Natural killer cell (primary cell): ENCODE measurements at regions of chr22 and their contacts with region 1.

Region 1: GRCh38 chr22:22848364-22848866 is 39.2 kb upstream of the IGLL5 start:
- DNase-seq: peak; percentile 56 to 85
- ATAC-seq: peak; percentile 58 to 90 (median 83)
- H3K4me3 ChIP-seq: no peak overlapping the region
- H3K4me3 Mint-ChIP-seq: no peak overlapping the region
- H3K27ac ChIP-seq: no peak overlapping the region
- H3K27ac Mint-ChIP-seq: peak overlapping the region in 1 of 2 donors; percentile 56
- H3K4me1 ChIP-seq: peaks cover 14% of the 10 kb centered on the region
- H3K4me1 Mint-ChIP-seq: peaks cover 46 to 68% of the 10 kb centered on the region in 2 donors
- H3K27me3 ChIP-seq: no peaks in the 10 kb centered on the region
- H3K27me3 Mint-ChIP-seq: no peaks in the 10 kb centered on the region
- CTCF ChIP-seq: peak; percentile 92

Region 2: DNA sequence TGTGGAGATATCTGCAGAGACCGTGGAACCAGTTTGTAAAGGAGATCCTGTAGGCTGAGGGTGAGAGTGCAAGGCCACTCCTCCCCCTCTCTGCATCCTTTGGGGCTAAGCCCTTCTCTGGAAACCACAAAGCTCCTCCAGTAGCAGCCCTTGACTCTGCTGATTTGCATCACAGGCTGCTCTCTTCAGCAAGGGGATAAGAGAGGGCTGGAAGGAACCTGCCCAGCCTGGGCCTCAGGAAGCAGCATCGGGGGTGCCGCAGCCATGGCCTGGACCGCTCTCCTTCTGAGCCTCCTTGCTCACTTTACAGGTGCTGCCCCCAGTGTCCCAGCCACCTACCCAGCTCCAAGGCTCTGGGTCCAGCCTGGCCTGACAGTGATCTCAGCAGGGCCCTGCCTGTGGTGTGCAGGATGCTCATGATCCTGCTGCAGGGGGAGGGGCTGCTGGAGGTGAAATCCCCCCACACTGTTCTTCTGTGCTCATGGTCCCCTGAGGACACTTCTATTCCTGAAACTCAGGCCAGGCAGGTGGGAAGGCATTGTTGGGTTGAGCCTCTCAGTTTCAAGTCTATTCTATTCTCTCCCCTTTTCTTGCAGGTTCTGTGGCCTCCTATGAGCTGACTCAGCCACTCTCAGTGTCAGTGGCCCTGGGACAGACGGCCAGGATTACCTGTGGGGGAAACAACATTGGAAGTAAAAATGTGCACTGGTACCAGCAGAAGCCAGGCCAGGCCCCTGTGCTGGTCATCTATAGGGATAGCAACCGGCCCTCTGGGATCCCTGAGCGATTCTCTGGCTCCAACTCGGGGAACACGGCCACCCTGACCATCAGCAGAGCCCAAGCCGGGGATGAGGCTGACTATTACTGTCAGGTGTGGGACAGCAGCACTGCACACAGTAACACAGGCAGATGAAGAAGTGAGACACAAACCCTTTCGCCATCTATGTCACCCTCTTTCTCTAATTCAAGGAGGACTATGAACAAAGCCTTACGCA is 29.3 kb before region 1 on chr22:
- intact Hi-C with region 1: loop called (anchors 5 kb)
- DNase-seq: peak in 1 of 2 donors; percentile 68
- ATAC-seq: peak; percentile 15 to 51 (median 37)
- H3K4me3 ChIP-seq: peak overlapping the region; percentile 28
- H3K4me3 Mint-ChIP-seq: peak overlapping the region; percentile 87
- H3K27ac ChIP-seq: peak overlapping the region; percentile 65
- H3K27ac Mint-ChIP-seq: peak overlapping the region; percentile 82 to 87
- H3K4me1 ChIP-seq: peaks cover 96% of the 10 kb centered on the region
- H3K4me1 Mint-ChIP-seq: peaks cover 98 to 99% of the 10 kb centered on the region in 2 donors
- H3K27me3 ChIP-seq: no peaks in the 10 kb centered on the region
- H3K27me3 Mint-ChIP-seq: no peaks in the 10 kb centered on the region
- CTCF ChIP-seq: no peak

Region 3: DNA sequence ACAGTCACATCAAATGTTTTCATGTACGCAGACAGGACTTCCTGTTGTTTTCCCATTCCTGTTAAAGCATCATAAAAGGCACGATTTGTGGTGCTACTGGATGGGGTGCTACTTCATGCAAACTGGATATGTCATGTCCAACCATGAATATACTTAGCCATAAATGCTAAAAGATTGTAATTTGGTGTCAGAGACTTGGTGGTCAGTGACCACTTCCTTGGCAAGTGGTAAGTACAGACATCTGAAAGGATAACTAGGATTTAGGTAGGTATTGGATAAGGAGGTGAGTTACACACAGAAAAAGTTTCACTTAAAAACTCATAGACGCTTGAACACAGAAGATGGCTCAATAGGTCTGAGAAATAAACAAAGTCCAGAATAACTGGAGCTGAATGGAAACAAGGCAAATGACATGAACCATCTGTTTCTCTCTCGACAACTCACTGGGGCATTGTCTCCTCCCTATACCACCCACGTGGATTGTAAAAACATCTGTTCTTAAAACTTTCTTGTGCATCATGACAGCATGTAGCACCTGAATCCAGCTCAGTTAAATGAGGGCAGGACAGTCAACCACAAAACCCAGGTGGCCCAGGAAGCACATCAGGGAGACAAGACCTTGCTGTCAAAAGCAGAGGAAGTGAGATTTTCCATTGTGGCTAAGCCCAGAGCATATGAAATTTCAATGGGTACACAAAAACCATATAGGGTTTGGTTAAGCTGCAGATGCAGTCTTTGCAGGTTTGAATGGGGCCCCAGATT is 17.1 kb after region 1 on chr22:
- intact Hi-C with region 1: no loop called
- DNase-seq: peak in 1 of 2 donors; percentile 53
- ATAC-seq: peak; percentile 51 to 62 (median 58)
- H3K4me3 ChIP-seq: no peak overlapping the region
- H3K4me3 Mint-ChIP-seq: peak overlapping the region; percentile 13
- H3K27ac ChIP-seq: peak overlapping the region; percentile 13
- H3K27ac Mint-ChIP-seq: peak overlapping the region; percentile 70 to 78
- H3K4me1 ChIP-seq: peaks cover 26% of the 10 kb centered on the region
- H3K4me1 Mint-ChIP-seq: peaks cover 51 to 52% of the 10 kb centered on the region in 2 donors
- H3K27me3 ChIP-seq: no peaks in the 10 kb centered on the region
- H3K27me3 Mint-ChIP-seq: no peaks in the 10 kb centered on the region
- CTCF ChIP-seq: no peak

Region 4: GRCh38 chr22:22959147-22959827 is 110.9 kb after region 1 on chr22:
- intact Hi-C with region 1: no loop called
- DNase-seq: peak; percentile 74 to 89
- ATAC-seq: peak; percentile 56 to 79 (median 72)
- H3K4me3 ChIP-seq: no peak overlapping the region
- H3K4me3 Mint-ChIP-seq: no peak overlapping the region
- H3K27ac ChIP-seq: no peak overlapping the region
- H3K27ac Mint-ChIP-seq: no peak overlapping the region
- H3K4me1 ChIP-seq: peaks cover 5% of the 10 kb centered on the region
- H3K4me1 Mint-ChIP-seq: peaks cover 5 to 9% of the 10 kb centered on the region in 2 donors
- H3K27me3 ChIP-seq: no peaks in the 10 kb centered on the region
- H3K27me3 Mint-ChIP-seq: peaks cover 19 to 39% of the 10 kb centered on the region in 2 donors
- CTCF ChIP-seq: peak; percentile 99